Activated naive CD4-positive, alpha-beta T cell treated with anti-CD3 and anti-CD28 coated beads for 36 hours (primary cell): ENCODE measurements at regions of chr13 and their contacts with region 1.

Region 1: GRCh38 chr13:94327318-94327717 is 152.2 kb downstream of the DCT start:
- DNase-seq: no peak
- H3K4me3 Mint-ChIP-seq: no peak overlapping the region
- H3K27ac Mint-ChIP-seq: no peak overlapping the region
- H3K4me1 Mint-ChIP-seq: peaks cover 73% of the 10 kb centered on the region
- H3K27me3 Mint-ChIP-seq: peaks cover 5% of the 10 kb centered on the region

Region 2: GRCh38 chr13:94239135-94239534 is 88.2 kb before region 1 on chr13:
- CTCF ChIA-PET with region 1: no interaction called
- intact Hi-C with region 1: loop called (anchors 5 kb)
- DNase-seq: peak; percentile 33
- H3K4me3 Mint-ChIP-seq: no peak overlapping the region
- H3K27ac Mint-ChIP-seq: no peak overlapping the region
- H3K4me1 Mint-ChIP-seq: peaks cover 44% of the 10 kb centered on the region
- H3K27me3 Mint-ChIP-seq: no peaks in the 10 kb centered on the region

Region 3: GRCh38 chr13:94317063-94317491 is 10.2 kb before region 1 on chr13:
- CTCF ChIA-PET with region 1: interaction called, 3 read pairs
- intact Hi-C with region 1: loop called (anchors 1 kb)
- DNase-seq: no peak
- H3K4me3 Mint-ChIP-seq: no peak overlapping the region
- H3K27ac Mint-ChIP-seq: no peak overlapping the region
- H3K4me1 Mint-ChIP-seq: peaks cover 9% of the 10 kb centered on the region
- H3K27me3 Mint-ChIP-seq: no peaks in the 10 kb centered on the region

Region 4: GRCh38 chr13:94345374-94346195 is 18.3 kb after region 1 on chr13:
- CTCF ChIA-PET with region 1: interaction called, 3 read pairs
- intact Hi-C with region 1: loop called (anchors 1 kb)
- DNase-seq: no peak
- H3K4me3 Mint-ChIP-seq: no peak overlapping the region
- H3K27ac Mint-ChIP-seq: no peak overlapping the region
- H3K4me1 Mint-ChIP-seq: peaks cover 24% of the 10 kb centered on the region
- H3K27me3 Mint-ChIP-seq: peaks cover 4% of the 10 kb centered on the region

Region 5: GRCh38 chr13:94351292-94351990 is 24.1 kb after region 1 on chr13:
- CTCF ChIA-PET with region 1: interaction called, 3 read pairs
- intact Hi-C with region 1: loop called (anchors 1 kb)
- DNase-seq: peak; percentile 38
- H3K4me3 Mint-ChIP-seq: no peak overlapping the region
- H3K27ac Mint-ChIP-seq: no peak overlapping the region
- H3K4me1 Mint-ChIP-seq: peaks cover 30% of the 10 kb centered on the region
- H3K27me3 Mint-ChIP-seq: peaks cover 4% of the 10 kb centered on the region

Region 6: DNA sequence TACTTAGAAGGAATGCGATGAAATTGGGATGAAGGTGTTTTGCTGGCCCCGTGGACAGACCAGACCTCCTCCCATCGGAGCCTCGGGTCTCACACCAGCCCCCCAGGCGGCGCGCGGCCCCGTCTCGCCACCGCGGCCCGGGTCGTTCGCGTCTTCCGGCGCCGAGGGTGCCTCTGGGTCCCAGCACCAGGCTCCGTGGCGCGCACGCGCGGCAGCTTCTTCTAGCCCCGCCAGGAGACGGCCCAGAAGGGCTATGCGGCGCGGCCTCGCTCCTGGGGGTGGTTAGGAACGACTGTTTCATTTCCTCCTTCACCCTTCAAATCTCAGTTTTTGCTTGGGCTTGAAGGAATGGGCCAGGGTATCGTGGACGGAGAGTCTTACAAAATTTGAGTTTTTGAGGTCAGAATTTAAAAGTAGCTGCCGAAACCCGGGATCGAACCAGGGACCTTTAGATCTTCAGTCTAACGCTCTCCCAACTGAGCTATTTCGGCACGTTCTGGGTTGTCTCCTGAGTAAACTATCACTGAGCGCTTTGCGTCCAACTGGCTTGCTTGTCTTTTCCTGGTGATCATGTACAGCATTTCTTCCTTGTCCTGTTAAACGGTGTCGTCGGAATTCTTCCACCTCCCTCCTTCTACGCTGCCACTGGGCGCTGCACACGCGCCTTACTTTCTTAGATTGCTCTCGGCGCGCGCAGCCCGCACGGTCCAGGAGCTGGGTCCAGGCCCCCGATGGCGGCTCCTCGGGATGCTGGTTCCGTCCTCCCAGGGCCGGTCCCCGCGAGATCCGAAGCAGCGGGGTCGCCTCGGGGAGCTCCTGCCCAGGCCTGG is 222.1 kb after region 1 on chr13:
- CTCF ChIA-PET with region 1: no interaction called
- intact Hi-C with region 1: loop called (anchors 10 kb)
- DNase-seq: peak; percentile 93
- H3K4me3 Mint-ChIP-seq: peak overlapping the region; percentile 75
- H3K27ac Mint-ChIP-seq: peak overlapping the region; percentile 88
- H3K4me1 Mint-ChIP-seq: peaks cover 5% of the 10 kb centered on the region
- H3K27me3 Mint-ChIP-seq: peaks cover 3% of the 10 kb centered on the region

Region 7: DNA sequence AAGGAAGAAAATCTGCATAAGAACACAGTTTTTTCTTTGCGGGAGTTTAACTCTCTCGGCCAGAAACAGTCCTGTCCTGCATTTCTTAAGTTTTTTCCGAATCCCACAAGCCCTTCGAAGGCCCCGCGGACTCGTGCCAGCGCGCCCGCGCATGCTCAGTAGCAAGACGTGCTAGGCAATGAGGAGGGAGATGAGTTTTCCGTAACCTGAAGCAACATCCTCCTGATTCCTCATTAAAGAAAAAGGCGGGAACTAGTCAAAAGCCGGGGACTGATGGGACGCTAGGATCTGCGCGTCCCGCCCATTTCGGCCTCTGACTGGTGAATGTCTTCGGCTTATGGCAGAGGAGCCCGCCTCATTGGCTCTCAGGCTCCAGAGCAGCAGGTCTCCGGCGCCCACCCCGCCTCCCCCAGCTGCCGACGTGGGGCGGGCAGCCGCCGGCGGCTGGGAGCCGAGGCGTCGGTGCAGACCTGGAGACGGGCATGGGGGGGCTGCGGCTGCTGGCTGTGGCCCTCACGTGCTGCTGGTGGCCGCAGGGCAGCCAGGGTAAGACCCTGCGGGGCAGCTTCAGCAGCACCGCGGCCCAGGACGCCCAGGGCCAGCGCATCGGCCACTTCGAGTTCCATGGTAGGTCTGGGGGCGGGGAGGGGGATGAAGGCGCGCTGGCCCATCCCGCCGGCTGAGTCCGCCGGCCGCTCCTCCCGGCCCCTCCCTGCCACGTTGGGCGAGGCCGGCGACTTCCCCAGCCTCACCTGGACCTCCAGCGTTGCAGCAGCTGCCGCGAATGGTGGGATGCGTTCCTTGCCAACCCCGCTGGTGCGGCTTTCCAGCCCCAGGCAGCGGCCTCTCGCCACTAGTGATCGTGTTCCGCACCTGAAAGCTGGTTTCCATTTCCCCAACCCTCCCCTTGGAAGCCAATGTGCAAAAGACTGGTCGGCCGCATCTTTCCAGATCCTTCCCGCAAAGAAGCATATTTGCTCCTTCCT is 274.4 kb after region 1 on chr13 and contains the start of gene GPR180:
- CTCF ChIA-PET with region 1: no interaction called
- intact Hi-C with region 1: loop called (anchors 5 kb)
- DNase-seq: peak; percentile 94
- H3K4me3 Mint-ChIP-seq: peak within 1 kb of the TSS; percentile 86
- H3K27ac Mint-ChIP-seq: peak within 1 kb of the TSS; percentile 84
- H3K4me1 Mint-ChIP-seq: peaks cover 34% of the 10 kb centered on the region
- H3K27me3 Mint-ChIP-seq: no peaks in the 10 kb centered on the region
- total RNA-seq, gene GPR180: 5.6 to 5.7 TPM